Activated B cell treated with CpG ODN at 0.5 μM for 24 hours (primary cell): ENCODE measurements at regions of chr13 and their contacts with region 1.

Region 1: GRCh38 chr13:40666045-40666904 is at the start of gene FOXO1:
- DNase-seq: peak; percentile 94
- ATAC-seq: peak; percentile 69
- H3K4me3 Mint-ChIP-seq: peak within 1 kb of the TSS; percentile 93
- H3K27ac Mint-ChIP-seq: peak within 1 kb of the TSS; percentile 94
- H3K4me1 Mint-ChIP-seq: peaks cover 40% of the 10 kb centered on the region
- H3K27me3 Mint-ChIP-seq: no peaks in the 10 kb centered on the region
- CTCF ChIP-seq: no peak
- total RNA-seq, gene FOXO1: 47.5 and 50.4 TPM in 2 replicates

Region 2: DNA sequence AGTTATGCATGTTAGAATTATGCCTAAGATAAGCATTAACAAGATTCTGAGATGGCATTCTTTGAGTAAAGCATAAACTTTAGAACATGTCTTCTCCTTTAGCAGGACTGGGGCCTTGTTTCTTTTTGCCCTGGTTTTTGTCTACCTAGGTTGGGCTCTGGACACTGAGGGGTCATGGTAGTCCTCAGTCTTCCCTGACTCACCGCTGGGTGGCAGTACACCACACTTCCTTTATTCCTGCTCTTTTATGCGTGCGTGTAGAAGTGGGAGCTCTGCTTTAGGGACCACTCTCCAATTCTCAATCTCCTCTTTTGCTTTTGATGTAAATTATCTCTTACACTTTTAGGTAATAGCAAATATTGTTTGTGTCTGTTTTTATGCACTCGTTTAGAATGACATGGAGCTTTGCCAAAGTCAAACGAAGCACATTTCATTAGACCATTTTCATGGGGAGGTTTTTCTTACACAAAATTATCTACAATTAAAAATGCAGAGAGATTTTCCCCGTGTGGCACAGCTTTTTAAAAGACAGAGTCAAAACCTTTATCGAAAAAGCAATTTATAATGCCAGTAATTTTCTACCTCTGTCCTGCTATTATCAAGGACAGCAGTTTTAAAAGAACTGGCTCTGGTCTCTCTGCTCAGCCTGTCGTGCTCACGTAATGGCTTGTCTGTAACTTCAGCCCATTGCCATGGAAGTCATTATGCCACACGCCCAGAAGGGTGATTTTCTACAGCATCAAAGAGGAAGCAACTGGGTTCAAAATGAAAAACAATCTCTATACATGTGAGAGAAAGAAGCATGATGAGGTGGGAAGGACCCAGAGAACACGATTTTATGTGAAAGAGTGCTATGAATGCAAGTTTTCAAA is 596.9 kb before region 1 on chr13:
- CTCF ChIA-PET with region 1: interaction called, 16 read pairs
- POLR2A ChIA-PET with region 1: interaction called, 22 read pairs
- intact Hi-C with region 1: loop called (anchors 1 kb)
- DNase-seq: peak; percentile 50
- ATAC-seq: peak; percentile 89
- H3K4me3 Mint-ChIP-seq: peak overlapping the region; percentile 47
- H3K27ac Mint-ChIP-seq: peak overlapping the region; percentile 19
- H3K4me1 Mint-ChIP-seq: peaks cover 12% of the 10 kb centered on the region
- H3K27me3 Mint-ChIP-seq: no peaks in the 10 kb centered on the region
- CTCF ChIP-seq: peak; percentile 27

Region 3: DNA sequence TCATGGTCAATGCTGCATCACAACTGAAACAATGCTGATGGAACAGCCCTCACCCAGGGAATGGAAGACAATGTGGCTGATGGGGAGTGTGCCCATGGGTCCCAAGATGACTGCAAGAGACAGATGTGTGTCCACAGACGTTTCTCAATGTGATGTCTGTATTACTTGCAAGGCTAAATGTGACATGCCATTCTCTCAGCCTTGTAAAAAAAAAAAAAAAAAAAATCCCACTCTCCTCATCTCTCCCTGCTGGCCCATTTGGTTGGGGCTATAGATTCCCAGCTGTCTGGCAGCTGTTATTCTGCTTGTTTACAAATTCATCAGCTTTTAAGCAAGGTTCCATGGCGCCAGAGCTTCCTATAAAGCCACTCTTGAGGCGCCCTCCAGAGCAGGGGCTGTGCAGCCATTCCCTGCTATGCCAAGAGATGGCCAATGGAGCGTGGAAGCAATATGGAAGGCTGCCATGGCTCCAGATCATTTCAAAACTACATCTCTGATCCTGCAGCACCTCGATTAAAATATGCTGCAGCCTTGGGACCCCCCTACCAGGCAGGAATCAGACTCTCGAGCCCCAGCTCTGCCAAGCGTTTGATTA is 294.6 kb before region 1 on chr13:
- CTCF ChIA-PET with region 1: no interaction called
- POLR2A ChIA-PET with region 1: no interaction called
- intact Hi-C with region 1: loop called (anchors 5 kb)
- DNase-seq: no peak
- ATAC-seq: no peak
- H3K4me3 Mint-ChIP-seq: no peak overlapping the region
- H3K27ac Mint-ChIP-seq: no peak overlapping the region
- H3K4me1 Mint-ChIP-seq: peaks cover 28% of the 10 kb centered on the region
- H3K27me3 Mint-ChIP-seq: no peaks in the 10 kb centered on the region
- CTCF ChIP-seq: no peak

Region 4: GRCh38 chr13:40445557-40445990 is 220.7 kb before region 1 on chr13:
- CTCF ChIA-PET with region 1: interaction called, 3 read pairs
- POLR2A ChIA-PET with region 1: interaction called, 33 read pairs
- intact Hi-C with region 1: loop called (anchors 1 kb)
- DNase-seq: peak; percentile 80
- ATAC-seq: peak; percentile 96
- H3K4me3 Mint-ChIP-seq: peak overlapping the region; percentile 66
- H3K27ac Mint-ChIP-seq: peak overlapping the region; percentile 95
- H3K4me1 Mint-ChIP-seq: peaks cover 75% of the 10 kb centered on the region
- H3K27me3 Mint-ChIP-seq: no peaks in the 10 kb centered on the region
- CTCF ChIP-seq: no peak

Region 5: GRCh38 chr13:40629678-40630384 is 36.4 kb before region 1 on chr13:
- CTCF ChIA-PET with region 1: no interaction called
- POLR2A ChIA-PET with region 1: interaction called, 11 read pairs
- intact Hi-C with region 1: loop called (anchors 2 kb)
- DNase-seq: no peak
- ATAC-seq: peak; percentile 77
- H3K4me3 Mint-ChIP-seq: peak overlapping the region; percentile 57
- H3K27ac Mint-ChIP-seq: peak overlapping the region; percentile 84
- H3K4me1 Mint-ChIP-seq: peaks cover 91% of the 10 kb centered on the region
- H3K27me3 Mint-ChIP-seq: no peaks in the 10 kb centered on the region
- CTCF ChIP-seq: no peak

Region 6: GRCh38 chr13:40982772-40983171 is 316.5 kb after region 1 on chr13:
- CTCF ChIA-PET with region 1: no interaction called
- POLR2A ChIA-PET with region 1: no interaction called
- intact Hi-C with region 1: loop called (anchors 10 kb)
- DNase-seq: no peak
- ATAC-seq: peak; percentile 64
- H3K4me3 Mint-ChIP-seq: peak overlapping the region; percentile 87
- H3K27ac Mint-ChIP-seq: peak overlapping the region; percentile 86
- H3K4me1 Mint-ChIP-seq: peaks cover 80% of the 10 kb centered on the region
- H3K27me3 Mint-ChIP-seq: no peaks in the 10 kb centered on the region
- CTCF ChIP-seq: no peak